B cell (primary cell): ENCODE measurements at regions of chr20 and their contacts with region 1.

Region 1: GRCh38 chr20:5529331-5530148 is 212.8 kb upstream of the PROKR2 start:
- DNase-seq: peak; percentile 85
- ATAC-seq: peak; percentile 91
- H3K4me3 ChIP-seq: no peak overlapping the region
- H3K4me3 Mint-ChIP-seq: peak overlapping the region; percentile 54
- H3K27ac ChIP-seq: no peak overlapping the region
- H3K27ac Mint-ChIP-seq: peak overlapping the region; percentile 56
- H3K4me1 ChIP-seq: peaks cover 7 to 12% of the 10 kb centered on the region in 2 donors
- H3K4me1 Mint-ChIP-seq: peaks cover 10% of the 10 kb centered on the region
- H3K27me3 ChIP-seq: no peaks in the 10 kb centered on the region
- H3K27me3 Mint-ChIP-seq: no peaks in the 10 kb centered on the region
- CTCF ChIP-seq: peak; percentile 79

Region 2: DNA sequence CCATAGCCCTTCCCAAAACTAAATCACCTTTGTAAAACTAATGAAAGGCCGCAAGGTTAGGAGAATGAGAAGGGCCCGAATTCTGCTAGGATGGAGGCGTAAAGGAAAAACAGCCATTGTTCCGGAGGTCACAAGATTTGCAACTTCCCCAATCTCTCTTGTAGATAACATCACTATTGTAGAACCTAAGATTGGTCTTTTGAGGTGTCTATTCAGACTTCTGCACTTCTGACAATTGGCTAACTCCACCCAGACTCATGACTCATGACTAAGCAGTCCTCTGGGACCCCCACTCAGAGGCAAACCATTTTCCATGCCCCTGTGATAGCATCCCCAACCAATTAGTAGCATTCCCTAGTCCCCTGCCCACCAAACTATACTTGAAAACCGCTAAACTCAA is 10.2 kb after region 1 on chr20:
- CTCF ChIA-PET with region 1: interaction called, 19 read pairs
- POLR2A ChIA-PET with region 1: no interaction called
- intact Hi-C with region 1: no loop called
- DNase-seq: no peak
- ATAC-seq: no peak
- H3K4me3 ChIP-seq: no peak overlapping the region
- H3K4me3 Mint-ChIP-seq: no peak overlapping the region
- H3K27ac ChIP-seq: no peak overlapping the region
- H3K27ac Mint-ChIP-seq: no peak overlapping the region
- H3K4me1 ChIP-seq: no peaks in the 10 kb centered on the region
- H3K4me1 Mint-ChIP-seq: peaks cover 5% of the 10 kb centered on the region
- H3K27me3 ChIP-seq: no peaks in the 10 kb centered on the region
- H3K27me3 Mint-ChIP-seq: no peaks in the 10 kb centered on the region
- CTCF ChIP-seq: no peak

Region 3: GRCh38 chr20:5569021-5569420 is 39.5 kb after region 1 on chr20:
- CTCF ChIA-PET with region 1: interaction called, 30 read pairs
- POLR2A ChIA-PET with region 1: no interaction called
- intact Hi-C with region 1: loop called (anchors 1 kb)
- DNase-seq: peak; percentile 74
- ATAC-seq: peak; percentile 84
- H3K4me3 ChIP-seq: no peak overlapping the region
- H3K4me3 Mint-ChIP-seq: no peak overlapping the region
- H3K27ac ChIP-seq: peak overlapping the region in 1 of 2 donors; percentile 24
- H3K27ac Mint-ChIP-seq: no peak overlapping the region
- H3K4me1 ChIP-seq: peaks cover 10 to 12% of the 10 kb centered on the region in 2 donors
- H3K4me1 Mint-ChIP-seq: peaks cover 23% of the 10 kb centered on the region
- H3K27me3 ChIP-seq: no peaks in the 10 kb centered on the region
- H3K27me3 Mint-ChIP-seq: no peaks in the 10 kb centered on the region
- CTCF ChIP-seq: peak; percentile 71

Region 4: DNA sequence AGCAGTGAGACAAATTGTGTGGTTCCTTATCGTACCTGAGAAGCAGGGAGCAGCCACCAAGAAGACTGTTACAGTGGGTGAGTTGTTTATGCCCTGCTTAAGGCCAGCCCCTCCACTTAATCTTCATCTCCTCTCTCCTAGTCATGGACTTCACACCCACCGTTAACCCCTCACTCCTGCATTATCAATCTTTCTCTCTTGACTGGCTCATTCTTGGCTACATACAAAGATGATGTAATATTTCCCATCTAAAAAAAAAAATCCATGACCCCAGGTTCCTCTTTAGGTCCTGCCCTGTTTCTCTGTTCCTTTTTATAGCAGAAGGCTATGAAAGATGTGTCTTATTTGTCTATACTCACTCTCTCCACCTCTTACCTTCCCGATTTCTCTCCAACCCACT is 293.0 kb after region 1 on chr20:
- CTCF ChIA-PET with region 1: interaction called, 12 read pairs
- POLR2A ChIA-PET with region 1: no interaction called
- intact Hi-C with region 1: loop called (anchors 1 kb)
- DNase-seq: peak; percentile 19
- ATAC-seq: peak; percentile 57
- H3K4me3 ChIP-seq: no peak overlapping the region
- H3K4me3 Mint-ChIP-seq: no peak overlapping the region
- H3K27ac ChIP-seq: no peak overlapping the region
- H3K27ac Mint-ChIP-seq: peak overlapping the region; percentile 59
- H3K4me1 ChIP-seq: peaks cover 8 to 15% of the 10 kb centered on the region in 2 donors
- H3K4me1 Mint-ChIP-seq: peaks cover 26% of the 10 kb centered on the region
- H3K27me3 ChIP-seq: no peaks in the 10 kb centered on the region
- H3K27me3 Mint-ChIP-seq: no peaks in the 10 kb centered on the region
- CTCF ChIP-seq: no peak

Region 5: DNA sequence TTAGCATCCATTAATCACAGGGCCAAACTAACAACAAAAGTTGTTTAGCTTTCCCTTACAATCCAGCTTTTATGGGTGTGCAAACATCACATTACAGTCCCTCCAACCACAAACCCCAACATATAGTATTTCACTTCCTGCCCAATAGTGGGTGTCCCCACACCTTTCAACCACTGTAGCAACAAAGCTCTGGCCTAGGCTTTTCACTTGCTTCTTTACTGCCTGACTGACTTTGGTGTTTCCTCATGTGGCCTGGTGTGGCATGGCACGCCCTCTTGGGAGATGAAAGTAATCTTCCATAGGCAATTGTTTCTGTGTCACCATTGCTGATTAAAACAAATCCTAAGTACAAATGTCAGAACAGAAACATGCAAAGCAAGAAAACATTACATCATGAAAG is 467.2 kb after region 1 on chr20:
- CTCF ChIA-PET with region 1: interaction called, 21 read pairs
- POLR2A ChIA-PET with region 1: no interaction called
- intact Hi-C with region 1: no loop called
- DNase-seq: peak; percentile 52
- ATAC-seq: peak; percentile 75
- H3K4me3 ChIP-seq: no peak overlapping the region
- H3K4me3 Mint-ChIP-seq: no peak overlapping the region
- H3K27ac ChIP-seq: no peak overlapping the region
- H3K27ac Mint-ChIP-seq: peak overlapping the region; percentile 66
- H3K4me1 ChIP-seq: peaks cover 4 to 10% of the 10 kb centered on the region in 2 donors
- H3K4me1 Mint-ChIP-seq: peaks cover 10% of the 10 kb centered on the region
- H3K27me3 ChIP-seq: no peaks in the 10 kb centered on the region
- H3K27me3 Mint-ChIP-seq: no peaks in the 10 kb centered on the region
- CTCF ChIP-seq: no peak

Region 6: DNA sequence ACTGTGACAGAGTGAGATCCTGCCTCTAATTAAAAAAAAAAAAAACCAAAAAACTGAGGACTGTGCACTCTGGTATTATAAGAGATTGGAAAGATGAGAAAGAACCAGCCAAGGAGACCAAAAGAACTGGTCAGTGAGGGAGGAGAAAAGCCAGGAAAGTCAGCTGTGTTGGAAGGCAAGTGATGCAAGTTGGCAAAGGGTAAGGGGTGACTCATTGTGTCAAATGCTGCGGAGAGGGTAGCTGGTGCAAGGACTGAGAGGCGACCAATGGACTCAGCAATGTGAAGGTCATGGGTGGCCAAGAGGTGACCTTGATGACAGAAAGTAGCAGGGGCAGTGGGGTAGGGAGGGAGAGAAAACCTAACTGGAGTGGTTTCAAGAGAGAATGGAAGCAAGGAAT is 551.7 kb after region 1 on chr20:
- CTCF ChIA-PET with region 1: interaction called, 148 read pairs
- POLR2A ChIA-PET with region 1: no interaction called
- intact Hi-C with region 1: no loop called
- DNase-seq: no peak
- ATAC-seq: no peak
- H3K4me3 ChIP-seq: no peak overlapping the region
- H3K4me3 Mint-ChIP-seq: no peak overlapping the region
- H3K27ac ChIP-seq: no peak overlapping the region
- H3K27ac Mint-ChIP-seq: no peak overlapping the region
- H3K4me1 ChIP-seq: no peaks in the 10 kb centered on the region
- H3K4me1 Mint-ChIP-seq: no peaks in the 10 kb centered on the region
- H3K27me3 ChIP-seq: peaks cover 0 to 3% (median 0%) of the 10 kb centered on the region in 4 experiments
- H3K27me3 Mint-ChIP-seq: peaks cover 4% of the 10 kb centered on the region
- CTCF ChIP-seq: no peak